Left cardiac atrium (tissue), 4 donors: ENCODE measurements at regions of chr10 and their contacts with region 1.

Region 1: GRCh38 chr10:72692057-72692910 is at the start of gene MCU:
- DNase-seq: peak; percentile 96
- ATAC-seq: peak; percentile 98 to 99
- total RNA-seq, gene MCU: 16.1 to 21.1 TPM

Region 2: GRCh38 chr10:71771821-71772617 is 920.3 kb before region 1 on chr10:
- intact Hi-C with region 1: no loop called
- DNase-seq: peak; percentile 84
- ATAC-seq: peak; percentile 40 to 75

Region 3: DNA sequence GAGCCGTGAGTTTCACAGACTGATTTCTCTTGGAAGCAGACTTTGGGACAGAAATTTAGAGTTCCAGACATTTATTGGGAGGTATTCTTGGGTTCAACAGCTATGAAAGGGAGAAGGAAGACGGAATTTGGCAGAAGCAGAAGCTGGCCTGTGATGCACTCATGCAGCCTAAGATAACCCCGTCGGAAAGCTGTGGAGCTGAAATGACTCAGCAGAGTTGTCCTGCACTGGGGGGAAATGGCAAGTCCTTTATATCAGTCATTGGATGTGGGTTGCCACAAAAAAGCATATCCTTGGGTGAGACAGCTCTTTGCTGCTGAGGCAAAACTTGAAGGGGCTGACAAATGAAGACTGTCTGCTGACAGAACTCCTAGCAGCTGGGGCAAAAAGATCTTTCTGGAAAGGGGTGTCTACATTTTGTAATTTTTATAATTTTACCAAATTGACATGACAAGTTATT is 54.9 kb before region 1 on chr10:
- intact Hi-C with region 1: loop called in 1 of 2 experiments (anchors 10 kb)
- DNase-seq: peak; percentile 59
- ATAC-seq: peak; percentile 97 to 99